OCI-LY7 (cell line): ENCODE measurements at regions of chr2 and their contacts with region 1.

Region 1: DNA sequence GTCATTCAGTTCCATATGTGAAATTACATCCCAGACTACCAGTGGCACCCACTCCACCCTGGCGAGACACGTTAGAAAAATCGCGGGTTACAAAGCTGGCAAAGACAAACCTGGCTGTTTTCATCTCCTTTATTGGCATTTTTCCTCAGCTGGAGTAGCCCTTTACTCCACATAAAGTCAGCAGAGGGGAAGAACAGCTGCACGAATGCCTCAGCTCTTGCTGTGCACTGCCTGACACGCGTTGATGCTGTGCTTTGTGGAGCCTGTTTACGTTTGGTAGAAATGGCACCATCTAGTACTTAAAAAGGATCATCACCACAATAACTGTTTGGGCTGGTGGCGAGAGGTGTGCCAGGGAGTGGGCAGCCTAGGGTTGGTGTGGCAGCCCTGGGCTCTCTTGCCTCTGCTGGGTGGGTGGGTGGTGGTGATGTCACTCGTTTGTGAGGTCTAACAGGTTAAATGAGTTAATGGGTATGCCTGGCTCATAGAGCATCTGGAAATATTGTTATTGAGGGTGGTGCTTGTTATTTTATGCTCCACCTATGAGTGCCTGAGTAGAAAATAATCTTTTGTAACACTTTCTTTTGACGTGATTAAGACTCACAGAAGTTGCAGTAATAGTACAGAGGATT is 16.4 kb downstream of the FARP2 start:
- DNase-seq: no peak
- H3K4me3 ChIP-seq: no peak overlapping the region
- H3K27ac ChIP-seq: peak overlapping the region; percentile 73
- H3K4me1 ChIP-seq: peaks cover 75% of the 10 kb centered on the region
- CTCF ChIP-seq: no peak

Region 2: DNA sequence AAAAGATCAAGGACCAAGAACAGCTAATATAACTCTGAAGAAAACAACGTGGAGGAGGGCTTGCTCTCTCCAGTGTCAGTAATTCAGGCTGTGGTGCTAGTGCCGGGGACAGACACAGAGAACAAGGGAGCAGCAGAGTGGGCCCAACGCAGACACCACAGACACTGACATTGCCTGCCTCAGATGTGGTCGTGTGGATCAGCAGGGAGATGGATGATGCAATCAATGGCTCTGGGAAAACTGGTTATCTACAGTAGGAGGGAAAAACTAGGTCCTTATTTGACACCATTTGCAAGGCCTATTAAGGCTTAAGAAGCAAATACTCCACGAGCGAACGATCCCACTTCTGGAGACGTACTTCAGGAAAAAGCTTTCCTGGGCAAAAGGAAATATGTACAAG is 93.1 kb before region 1 on chr2:
- CTCF ChIA-PET with region 1: no interaction called
- POLR2A ChIA-PET with region 1: no interaction called
- intact Hi-C with region 1: no loop called
- DNase-seq: no peak
- H3K4me3 ChIP-seq: no peak overlapping the region
- H3K27ac ChIP-seq: no peak overlapping the region
- H3K4me1 ChIP-seq: peaks cover 9% of the 10 kb centered on the region
- CTCF ChIP-seq: no peak

Region 3: GRCh38 chr2:241443486-241444223 is 71.2 kb after region 1 on chr2:
- CTCF ChIA-PET with region 1: no interaction called
- POLR2A ChIA-PET with region 1: interaction called, 3 read pairs
- intact Hi-C with region 1: loop called (anchors 5 kb)
- DNase-seq: peak; percentile 90
- H3K4me3 ChIP-seq: peak overlapping the region; percentile 7
- H3K27ac ChIP-seq: no peak overlapping the region
- H3K4me1 ChIP-seq: peaks cover 21% of the 10 kb centered on the region
- CTCF ChIP-seq: no peak